ENCODE measurements at regions of chr2 and their contacts with region 1.

Region 1: GRCh38 chr2:239369631-239370161 is 31.1 kb downstream of the HDAC4 start:
- DNase-seq: peak; percentile 39 to 95 (median 92)
- ATAC-seq: peak; percentile 96
- H3K4me3 ChIP-seq: peak overlapping the region; percentile 46
- H3K4me3 Mint-ChIP-seq: peak overlapping the region in 4 of 10 donors; percentile 81 to 87 (median 84)
- H3K27ac ChIP-seq: peak overlapping the region; percentile 96
- H3K27ac Mint-ChIP-seq: no peak overlapping the region
- H3K4me1 ChIP-seq: peaks cover 11 to 41% of the 10 kb centered on the region in 2 donors
- H3K4me1 Mint-ChIP-seq: peaks cover 0 to 22% (median 10%) of the 10 kb centered on the region in 7 donors
- H3K27me3 ChIP-seq: no peaks in the 10 kb centered on the region
- H3K27me3 Mint-ChIP-seq: no peaks in the 10 kb centered on the region

Region 2: GRCh38 chr2:239257511-239257937 is 112.2 kb before region 1 on chr2:
- CTCF ChIA-PET with region 1: no interaction called
- POLR2A ChIA-PET with region 1: no interaction called
- intact Hi-C with region 1: no loop called
- DNase-seq: no peak
- ATAC-seq: peak; percentile 40
- H3K4me3 ChIP-seq: no peak overlapping the region
- H3K4me3 Mint-ChIP-seq: peak overlapping the region in 7 of 10 donors; percentile 26 to 93 (median 75)
- H3K27ac ChIP-seq: no peak overlapping the region
- H3K27ac Mint-ChIP-seq: peak overlapping the region in 8 of 9 donors; percentile 78 to 96 (median 90)
- H3K4me1 ChIP-seq: peaks cover 34 to 89% of the 10 kb centered on the region in 2 donors
- H3K4me1 Mint-ChIP-seq: peaks cover 71 to 100% (median 95%) of the 10 kb centered on the region in 7 donors
- H3K27me3 ChIP-seq: no peaks in the 10 kb centered on the region
- H3K27me3 Mint-ChIP-seq: peaks cover 0 to 4% (median 0%) of the 10 kb centered on the region in 5 donors

Region 3: GRCh38 chr2:239275044-239275685 is 94.5 kb before region 1 on chr2:
- CTCF ChIA-PET with region 1: interaction called, 3 read pairs
- POLR2A ChIA-PET with region 1: interaction called, 3 read pairs
- intact Hi-C with region 1: loop called in 1 of 2 experiments (anchors 2 kb)
- DNase-seq: peak; percentile 55 to 88 (median 78)
- ATAC-seq: peak; percentile 94
- H3K4me3 ChIP-seq: peak overlapping the region; percentile 35
- H3K4me3 Mint-ChIP-seq: peak overlapping the region; percentile 72 to 88 (median 80)
- H3K27ac ChIP-seq: peak overlapping the region; percentile 19
- H3K27ac Mint-ChIP-seq: peak overlapping the region; percentile 67 to 97 (median 87)
- H3K4me1 ChIP-seq: peaks cover 17 to 32% of the 10 kb centered on the region in 2 donors
- H3K4me1 Mint-ChIP-seq: peaks cover 53 to 84% (median 78%) of the 10 kb centered on the region in 7 donors
- H3K27me3 ChIP-seq: no peaks in the 10 kb centered on the region
- H3K27me3 Mint-ChIP-seq: peaks cover 0 to 4% (median 0%) of the 10 kb centered on the region in 5 donors

Region 4: DNA sequence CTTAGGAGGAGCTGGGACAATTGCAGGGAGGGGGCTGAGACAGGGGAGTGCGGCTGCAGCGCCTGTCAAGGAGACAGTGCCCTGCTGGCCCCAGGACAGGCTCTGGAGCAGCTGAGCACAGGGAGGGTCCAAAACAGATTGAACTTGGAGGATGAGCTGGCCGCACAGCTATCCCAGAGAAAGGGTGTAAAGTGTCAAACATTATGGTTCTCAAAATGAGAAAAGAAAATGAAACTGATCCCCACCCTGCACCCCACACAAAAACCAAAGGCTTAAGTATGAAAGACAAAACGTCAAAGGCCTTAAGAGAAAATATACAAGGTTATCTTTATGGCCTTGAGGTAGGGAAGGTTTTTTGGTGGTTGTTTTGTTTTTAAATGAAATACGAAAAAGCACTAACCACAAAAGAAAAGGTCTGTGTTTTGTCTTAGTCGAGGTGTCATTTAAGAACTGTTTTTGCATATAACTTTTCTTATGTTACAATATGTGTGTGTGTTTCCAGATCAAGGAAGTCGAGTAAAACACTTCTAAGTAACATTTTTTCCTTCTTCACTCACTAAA is 80.7 kb before region 1 on chr2:
- CTCF ChIA-PET with region 1: no interaction called
- POLR2A ChIA-PET with region 1: interaction called, 3 read pairs
- intact Hi-C with region 1: loop called in 1 of 2 experiments (anchors 2 kb)
- DNase-seq: peak in 7 of 9 donors; percentile 63 to 87 (median 81)
- ATAC-seq: peak; percentile 82
- H3K4me3 ChIP-seq: peak overlapping the region; percentile 49
- H3K4me3 Mint-ChIP-seq: peak overlapping the region; percentile 70 to 89 (median 79)
- H3K27ac ChIP-seq: peak overlapping the region; percentile 79
- H3K27ac Mint-ChIP-seq: peak overlapping the region; percentile 92 to 99 (median 96)
- H3K4me1 ChIP-seq: peaks cover 40 to 63% of the 10 kb centered on the region in 2 donors
- H3K4me1 Mint-ChIP-seq: peaks cover 60 to 98% (median 82%) of the 10 kb centered on the region in 7 donors
- H3K27me3 ChIP-seq: no peaks in the 10 kb centered on the region
- H3K27me3 Mint-ChIP-seq: peaks cover 0 to 3% (median 0%) of the 10 kb centered on the region in 5 donors

Region 5: GRCh38 chr2:239318790-239319661 is 50.7 kb before region 1 on chr2:
- CTCF ChIA-PET with region 1: interaction called, 3 read pairs
- POLR2A ChIA-PET with region 1: interaction called, 13 read pairs
- intact Hi-C with region 1: loop called in 1 of 2 experiments (anchors 1 kb)
- DNase-seq: peak in 4 of 9 donors; percentile 6 to 31 (median 28)
- ATAC-seq: peak; percentile 5
- H3K4me3 ChIP-seq: no peak overlapping the region
- H3K4me3 Mint-ChIP-seq: peak overlapping the region; percentile 78 to 90 (median 88)
- H3K27ac ChIP-seq: peak overlapping the region; percentile 64
- H3K27ac Mint-ChIP-seq: peak overlapping the region; percentile 93 to 100 (median 98)
- H3K4me1 ChIP-seq: peaks cover 31 to 41% of the 10 kb centered on the region in 2 donors
- H3K4me1 Mint-ChIP-seq: peaks cover 34 to 91% (median 78%) of the 10 kb centered on the region in 7 donors
- H3K27me3 ChIP-seq: no peaks in the 10 kb centered on the region
- H3K27me3 Mint-ChIP-seq: no peaks in the 10 kb centered on the region

Region 6: GRCh38 chr2:239326831-239327535 is 42.7 kb before region 1 on chr2:
- CTCF ChIA-PET with region 1: no interaction called
- POLR2A ChIA-PET with region 1: interaction called, 13 read pairs
- intact Hi-C with region 1: loop called (anchors 1 kb)
- DNase-seq: peak in 8 of 9 donors; percentile 54 to 81 (median 72)
- ATAC-seq: peak; percentile 83
- H3K4me3 ChIP-seq: no peak overlapping the region
- H3K4me3 Mint-ChIP-seq: peak overlapping the region; percentile 55 to 79 (median 71)
- H3K27ac ChIP-seq: peak overlapping the region; percentile 68
- H3K27ac Mint-ChIP-seq: peak overlapping the region; percentile 89 to 100 (median 95)
- H3K4me1 ChIP-seq: peaks cover 20 to 65% of the 10 kb centered on the region in 2 donors
- H3K4me1 Mint-ChIP-seq: peaks cover 54 to 99% (median 89%) of the 10 kb centered on the region in 7 donors
- H3K27me3 ChIP-seq: no peaks in the 10 kb centered on the region
- H3K27me3 Mint-ChIP-seq: no peaks in the 10 kb centered on the region

Region 7: GRCh38 chr2:239355139-239355538 is 14.6 kb before region 1 on chr2:
- CTCF ChIA-PET with region 1: no interaction called
- POLR2A ChIA-PET with region 1: interaction called, 5 read pairs
- intact Hi-C with region 1: loop called in 1 of 2 experiments (anchors 2 kb)
- DNase-seq: no peak
- ATAC-seq: no peak
- H3K4me3 ChIP-seq: no peak overlapping the region
- H3K4me3 Mint-ChIP-seq: no peak overlapping the region
- H3K27ac ChIP-seq: no peak overlapping the region
- H3K27ac Mint-ChIP-seq: peak overlapping the region in 2 of 9 donors; percentile 7 to 28
- H3K4me1 ChIP-seq: no peaks in the 10 kb centered on the region
- H3K4me1 Mint-ChIP-seq: peaks cover 6 to 25% (median 15%) of the 10 kb centered on the region in 7 donors
- H3K27me3 ChIP-seq: no peaks in the 10 kb centered on the region
- H3K27me3 Mint-ChIP-seq: no peaks in the 10 kb centered on the region

Region 8: GRCh38 chr2:239380831-239381708 is 11.4 kb after region 1 on chr2:
- CTCF ChIA-PET with region 1: interaction called, 12 read pairs
- POLR2A ChIA-PET with region 1: interaction called, 22 read pairs
- intact Hi-C with region 1: loop called (anchors 1 kb)
- DNase-seq: peak; percentile 34 to 87 (median 81)
- ATAC-seq: peak; percentile 91
- H3K4me3 ChIP-seq: peak overlapping the region; percentile 20
- H3K4me3 Mint-ChIP-seq: peak overlapping the region; percentile 69 to 93 (median 88)
- H3K27ac ChIP-seq: peak overlapping the region; percentile 67
- H3K27ac Mint-ChIP-seq: peak overlapping the region; percentile 90 to 99 (median 96)
- H3K4me1 ChIP-seq: peaks cover 0 to 15% of the 10 kb centered on the region in 2 donors
- H3K4me1 Mint-ChIP-seq: peaks cover 21 to 47% (median 35%) of the 10 kb centered on the region in 7 donors
- H3K27me3 ChIP-seq: no peaks in the 10 kb centered on the region
- H3K27me3 Mint-ChIP-seq: no peaks in the 10 kb centered on the region

Region 9: DNA sequence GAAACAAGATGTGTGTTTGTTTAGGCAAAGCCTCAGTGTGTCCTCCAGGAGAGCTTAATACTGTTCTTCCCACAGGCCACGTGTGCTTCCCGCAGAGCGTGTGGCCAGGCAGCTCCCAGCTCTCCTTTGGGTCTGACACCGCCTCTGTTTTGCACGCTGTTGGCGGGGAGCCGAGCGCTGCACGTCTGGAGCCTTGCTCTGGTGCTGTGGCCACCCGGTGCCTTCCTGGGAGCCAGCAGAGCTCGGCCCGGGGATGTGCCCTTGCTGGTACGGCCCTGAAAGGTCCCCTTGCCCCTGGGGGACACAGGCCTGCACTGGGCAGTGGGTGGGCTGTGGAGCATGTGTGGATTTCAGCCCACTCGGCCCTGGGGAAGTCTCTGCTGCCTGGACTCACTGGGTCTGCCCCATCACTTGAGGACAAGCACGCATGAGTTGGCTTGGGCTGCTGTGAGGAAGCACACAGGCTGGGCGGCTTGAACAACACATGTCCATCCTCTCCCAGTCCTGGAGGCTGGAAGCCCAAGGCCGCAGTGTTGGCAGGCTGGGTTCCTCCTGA is 191.8 kb after region 1 on chr2:
- CTCF ChIA-PET with region 1: no interaction called
- POLR2A ChIA-PET with region 1: no interaction called
- intact Hi-C with region 1: no loop called
- DNase-seq: no peak
- ATAC-seq: no peak
- H3K4me3 ChIP-seq: no peak overlapping the region
- H3K4me3 Mint-ChIP-seq: no peak overlapping the region
- H3K27ac ChIP-seq: no peak overlapping the region
- H3K27ac Mint-ChIP-seq: no peak overlapping the region
- H3K4me1 ChIP-seq: no peaks in the 10 kb centered on the region
- H3K4me1 Mint-ChIP-seq: no peaks in the 10 kb centered on the region
- H3K27me3 ChIP-seq: no peaks in the 10 kb centered on the region
- H3K27me3 Mint-ChIP-seq: peaks cover 0 to 10% (median 4%) of the 10 kb centered on the region in 5 donors

Measured in naive thymus-derived CD4-positive, alpha-beta T cell (primary cell).